ENCODE measurements at regions of chr11 and their contacts with region 1.

Region 1: GRCh38 chr11:43311791-43312607 is at the start of gene API5:
- DNase-seq: peak; percentile 94
- H3K4me3 Mint-ChIP-seq: peak within 1 kb of the TSS; percentile 92
- H3K27ac Mint-ChIP-seq: peak within 1 kb of the TSS; percentile 91
- H3K4me1 Mint-ChIP-seq: peaks cover 11% of the 10 kb centered on the region
- H3K27me3 Mint-ChIP-seq: no peaks in the 10 kb centered on the region
- CTCF ChIP-seq: peak; percentile 71
- total RNA-seq, gene API5: 100 and 128 TPM in 2 replicates

Region 2: GRCh38 chr11:42462558-42463310 is 849.3 kb before region 1 on chr11:
- CTCF ChIA-PET with region 1: no interaction called
- POLR2A ChIA-PET with region 1: no interaction called
- intact Hi-C with region 1: no loop called
- DNase-seq: no peak
- H3K4me3 Mint-ChIP-seq: no peak overlapping the region
- H3K27ac Mint-ChIP-seq: peak overlapping the region; percentile 31
- H3K4me1 Mint-ChIP-seq: no peaks in the 10 kb centered on the region
- H3K27me3 Mint-ChIP-seq: no peaks in the 10 kb centered on the region
- CTCF ChIP-seq: no peak

Region 3: DNA sequence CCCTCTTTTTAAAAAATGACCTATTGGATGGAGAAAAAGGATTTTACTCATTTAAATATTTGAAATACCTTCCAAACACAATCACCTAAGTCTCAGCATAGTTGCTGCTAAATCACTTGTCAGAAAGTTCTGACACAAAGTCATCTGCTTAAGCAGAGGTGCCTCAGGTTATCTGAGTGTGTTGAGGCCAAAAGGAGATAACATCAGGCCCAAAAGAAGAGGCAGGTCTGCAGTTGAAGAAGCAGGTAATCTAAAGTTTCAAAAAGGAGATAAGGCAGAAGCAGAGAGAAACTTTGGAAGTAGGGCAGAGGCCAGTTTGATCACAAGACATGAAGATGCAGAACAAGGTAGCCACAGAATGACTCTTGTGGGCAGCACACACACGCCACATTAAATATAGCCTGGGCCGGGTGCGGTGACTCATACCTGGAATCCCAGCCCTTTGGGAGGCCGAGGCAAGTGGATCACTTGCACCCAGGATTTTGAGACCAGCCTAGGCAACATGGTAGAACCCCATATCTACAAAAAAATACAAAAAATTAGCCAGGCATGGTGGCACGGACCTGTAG is 175.9 kb before region 1 on chr11:
- CTCF ChIA-PET with region 1: no interaction called
- POLR2A ChIA-PET with region 1: no interaction called
- intact Hi-C with region 1: no loop called
- DNase-seq: no peak
- H3K4me3 Mint-ChIP-seq: no peak overlapping the region
- H3K27ac Mint-ChIP-seq: no peak overlapping the region
- H3K4me1 Mint-ChIP-seq: no peaks in the 10 kb centered on the region
- H3K27me3 Mint-ChIP-seq: no peaks in the 10 kb centered on the region
- CTCF ChIP-seq: no peak

Region 4: GRCh38 chr11:43298397-43298796 is 13.6 kb before region 1 on chr11:
- CTCF ChIA-PET with region 1: interaction called, 14 read pairs
- POLR2A ChIA-PET with region 1: interaction called, 4 read pairs
- intact Hi-C with region 1: no loop called
- DNase-seq: no peak
- H3K4me3 Mint-ChIP-seq: no peak overlapping the region
- H3K27ac Mint-ChIP-seq: no peak overlapping the region
- H3K4me1 Mint-ChIP-seq: no peaks in the 10 kb centered on the region
- H3K27me3 Mint-ChIP-seq: no peaks in the 10 kb centered on the region
- CTCF ChIP-seq: no peak

Region 5: GRCh38 chr11:43358801-43359421 is 46.9 kb after region 1 on chr11 and contains the start of gene TTC17:
- CTCF ChIA-PET with region 1: interaction called, 4 read pairs
- POLR2A ChIA-PET with region 1: interaction called, 64 read pairs
- intact Hi-C with region 1: no loop called
- DNase-seq: peak; percentile 93
- H3K4me3 Mint-ChIP-seq: peak within 1 kb of the TSS; percentile 98
- H3K27ac Mint-ChIP-seq: peak within 1 kb of the TSS; percentile 97
- H3K4me1 Mint-ChIP-seq: peaks cover 11% of the 10 kb centered on the region
- H3K27me3 Mint-ChIP-seq: no peaks in the 10 kb centered on the region
- CTCF ChIP-seq: no peak
- total RNA-seq, gene TTC17: 92.7 and 94.5 TPM in 2 replicates

Region 6: GRCh38 chr11:43376594-43376993 is 64.6 kb after region 1 on chr11:
- CTCF ChIA-PET with region 1: no interaction called
- POLR2A ChIA-PET with region 1: interaction called, 16 read pairs
- intact Hi-C with region 1: no loop called
- DNase-seq: peak; percentile 83
- H3K4me3 Mint-ChIP-seq: no peak overlapping the region
- H3K27ac Mint-ChIP-seq: peak overlapping the region; percentile 84
- H3K4me1 Mint-ChIP-seq: peaks cover 9% of the 10 kb centered on the region
- H3K27me3 Mint-ChIP-seq: no peaks in the 10 kb centered on the region
- CTCF ChIP-seq: no peak

Region 7: GRCh38 chr11:43419460-43419859 is 107.5 kb after region 1 on chr11:
- CTCF ChIA-PET with region 1: interaction called, 5 read pairs
- POLR2A ChIA-PET with region 1: interaction called, 6 read pairs
- intact Hi-C with region 1: loop called (anchors 1 kb)
- DNase-seq: peak; percentile 49
- H3K4me3 Mint-ChIP-seq: no peak overlapping the region
- H3K27ac Mint-ChIP-seq: no peak overlapping the region
- H3K4me1 Mint-ChIP-seq: no peaks in the 10 kb centered on the region
- H3K27me3 Mint-ChIP-seq: no peaks in the 10 kb centered on the region
- CTCF ChIP-seq: peak; percentile 49